Mammary epithelial cell (primary cell): ENCODE measurements at regions of chr17 and their contacts with region 1.

Region 1: DNA sequence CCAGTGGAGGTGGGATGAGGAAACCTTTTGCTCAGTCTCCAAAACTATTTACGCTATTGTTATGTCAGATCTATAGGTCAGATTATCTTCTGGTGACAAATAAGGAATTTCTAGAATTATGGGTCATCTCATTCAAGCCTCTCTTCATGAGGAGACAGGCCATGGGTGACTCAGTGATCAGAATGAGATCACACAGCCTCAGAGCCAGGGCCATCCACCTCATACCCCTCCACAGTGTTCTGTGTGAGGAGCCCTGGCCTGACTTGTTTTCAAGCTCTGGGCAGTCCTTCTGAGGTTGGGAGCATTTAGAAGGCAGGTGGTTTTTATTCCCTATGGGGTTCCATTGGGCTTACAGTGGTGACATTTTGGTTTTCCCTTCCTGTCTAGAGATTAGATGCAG is 26.5 kb downstream of the YPEL2 start:
- DNase-seq: peak; percentile 85
- H3K4me3 ChIP-seq: no peak overlapping the region
- H3K27ac ChIP-seq: no peak overlapping the region
- H3K4me1 ChIP-seq: peaks cover 20% of the 10 kb centered on the region
- H3K27me3 ChIP-seq: no peaks in the 10 kb centered on the region
- CTCF ChIP-seq: no peak

Region 2: GRCh38 chr17:59435238-59435637 is 77.3 kb after region 1 on chr17:
- CTCF ChIA-PET with region 1: no interaction called
- dilution Hi-C with region 1: loop called (anchors 5 kb)
- in situ Hi-C with region 1: no loop called
- intact Hi-C with region 1: no loop called
- DNase-seq: peak; percentile 91
- H3K4me3 ChIP-seq: no peak overlapping the region
- H3K27ac ChIP-seq: no peak overlapping the region
- H3K4me1 ChIP-seq: peaks cover 9% of the 10 kb centered on the region
- H3K27me3 ChIP-seq: no peaks in the 10 kb centered on the region
- CTCF ChIP-seq: no peak

Region 3: DNA sequence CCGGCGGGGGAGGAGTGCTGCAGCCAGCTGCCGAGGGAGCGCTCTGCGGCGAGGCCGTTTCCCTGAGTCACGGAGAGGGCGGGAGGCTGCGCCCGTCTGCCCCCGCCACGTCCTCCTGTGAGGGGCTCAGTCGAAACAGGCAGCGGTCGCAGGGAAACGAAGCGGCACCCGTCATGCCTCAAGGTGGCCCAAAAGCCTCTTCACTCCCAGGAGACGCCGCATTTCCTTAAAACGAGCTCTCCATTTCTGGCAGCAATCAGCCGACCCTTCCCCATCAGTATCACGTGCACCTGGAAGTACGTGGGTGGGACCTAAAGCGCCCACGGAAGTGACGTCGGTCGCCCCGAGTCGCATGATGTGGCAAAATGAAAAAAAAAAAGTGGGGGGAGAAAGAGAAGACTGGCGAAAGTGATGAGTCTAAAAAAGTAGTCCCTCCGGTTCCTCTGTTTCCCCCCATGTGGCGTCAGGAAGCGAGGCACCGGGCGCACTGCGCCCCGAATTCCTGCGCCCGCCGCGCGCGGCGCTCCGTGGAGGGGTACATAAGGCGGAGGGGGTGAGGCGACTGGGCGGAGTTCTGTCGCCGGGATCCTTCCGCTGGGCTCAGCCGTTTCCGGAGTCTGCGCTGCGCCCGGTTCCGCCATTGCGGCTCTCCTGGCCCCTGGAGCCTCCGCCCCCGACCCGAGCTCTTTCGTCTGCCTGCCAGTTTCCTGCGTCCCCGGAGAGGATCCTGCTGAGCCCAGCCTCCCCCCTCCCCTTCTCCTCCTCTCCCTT is 261.5 kb after region 1 on chr17 and contains the start of gene CLTC:
- CTCF ChIA-PET with region 1: no interaction called
- dilution Hi-C with region 1: no loop called
- in situ Hi-C with region 1: no loop called
- intact Hi-C with region 1: no loop called
- DNase-seq: peak; percentile 97
- H3K4me3 ChIP-seq: peak within 1 kb of the TSS; percentile 83 to 97 (median 96)
- H3K27ac ChIP-seq: peak within 1 kb of the TSS; percentile 97
- H3K4me1 ChIP-seq: peaks cover 13% of the 10 kb centered on the region
- H3K27me3 ChIP-seq: no peaks in the 10 kb centered on the region
- CTCF ChIP-seq: no peak
- total RNA-seq, gene CLTC: 266 to 356 TPM